ENCODE measurements at regions of chr17 and their contacts with region 1.

Region 1: GRCh38 chr17:71237903-71238538 is 882.8 kb upstream of the SOX9 start:
- DNase-seq: no peak
- H3K4me3 ChIP-seq: no peak overlapping the region
- H3K27ac ChIP-seq: no peak overlapping the region
- H3K4me1 ChIP-seq: no peaks in the 10 kb centered on the region
- H3K27me3 ChIP-seq: no peaks in the 10 kb centered on the region
- CTCF ChIP-seq: no peak
- EP300 ChIP-seq: no peak
- POLR2A ChIP-seq: no peak

Region 2: GRCh38 chr17:71176331-71176730 is 61.7 kb before region 1 on chr17:
- intact Hi-C with region 1: loop called in 1 of 4 experiments (anchors 10 kb)
- DNase-seq: no peak
- H3K4me3 ChIP-seq: no peak overlapping the region
- H3K27ac ChIP-seq: no peak overlapping the region
- H3K4me1 ChIP-seq: no peaks in the 10 kb centered on the region
- H3K27me3 ChIP-seq: no peaks in the 10 kb centered on the region
- CTCF ChIP-seq: no peak
- EP300 ChIP-seq: no peak
- POLR2A ChIP-seq: no peak

Region 3: DNA sequence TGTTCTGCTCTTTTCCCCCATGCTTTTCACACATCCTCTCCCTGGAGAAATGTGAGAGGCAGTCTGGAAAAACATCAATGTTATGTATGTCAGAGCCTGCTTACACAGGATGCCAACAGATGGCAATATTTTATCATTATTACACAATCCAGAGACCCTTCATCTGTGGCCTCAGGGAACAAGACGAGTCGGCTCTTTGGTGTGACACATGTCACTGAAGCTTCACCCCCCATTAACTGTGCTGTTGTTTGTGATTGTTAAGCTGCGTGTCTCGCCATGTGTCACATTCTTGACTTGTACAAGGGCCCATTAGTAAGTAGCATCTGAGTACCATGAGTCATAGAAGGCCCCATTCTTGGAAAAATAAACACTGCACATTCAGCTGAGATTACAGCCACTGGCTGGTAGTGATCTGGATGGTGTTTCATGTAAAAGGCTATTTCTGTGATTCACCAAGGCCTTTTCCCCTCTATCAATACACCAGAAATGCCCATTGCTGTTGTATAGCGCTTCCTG is 200.7 kb after region 1 on chr17:
- intact Hi-C with region 1: loop called in 1 of 4 experiments (anchors 2 kb)
- DNase-seq: no peak
- H3K4me3 ChIP-seq: no peak overlapping the region
- H3K27ac ChIP-seq: no peak overlapping the region
- H3K4me1 ChIP-seq: no peaks in the 10 kb centered on the region
- H3K27me3 ChIP-seq: no peaks in the 10 kb centered on the region
- CTCF ChIP-seq: no peak
- EP300 ChIP-seq: no peak
- POLR2A ChIP-seq: no peak